AG04449 (cell line): ENCODE measurements at regions of chr13 and their contacts with region 1.

Region 1: DNA sequence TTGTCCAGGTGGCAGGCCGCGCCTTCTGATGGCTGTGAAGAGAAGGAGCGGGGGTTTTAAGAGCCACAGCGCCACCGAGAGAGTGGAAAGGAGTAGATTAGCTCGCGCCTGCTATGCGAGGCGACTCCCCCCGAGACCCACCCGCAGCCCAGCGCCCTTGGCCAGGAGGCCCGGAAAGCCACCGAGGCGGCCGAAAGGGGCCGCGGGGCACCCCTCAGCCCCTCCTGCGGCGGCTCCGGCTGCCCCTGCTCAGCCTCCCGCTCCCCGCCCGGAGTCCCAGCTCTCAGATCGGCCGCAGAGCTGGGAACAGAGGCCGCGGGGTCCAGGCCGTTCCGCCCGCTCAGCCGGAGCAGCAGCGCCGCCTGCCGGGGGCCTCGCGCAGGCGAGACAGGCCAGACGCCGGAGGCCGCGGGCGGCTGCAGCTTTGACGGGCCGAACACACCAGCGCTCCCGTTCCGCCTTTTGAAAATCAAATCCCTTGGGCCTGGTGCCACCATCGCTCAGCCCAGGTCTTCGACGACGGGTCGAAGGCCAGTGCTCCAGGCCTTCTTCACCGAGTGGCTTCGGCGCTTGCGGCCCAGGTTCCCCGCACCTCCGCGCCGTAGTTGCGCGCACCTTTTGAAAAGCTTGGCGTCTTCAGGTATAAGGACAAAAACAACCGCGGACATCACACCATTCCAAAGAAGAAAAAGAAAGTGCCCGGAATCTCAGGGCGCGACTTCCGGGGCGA is 15.3 kb downstream of the CDX2 start:
- DNase-seq: no peak
- H3K4me3 ChIP-seq: peak overlapping the region; percentile 56
- CTCF ChIP-seq: peak; percentile 84

Region 2: GRCh38 chr13:27367570-27367969 is 586.3 kb before region 1 on chr13:
- CTCF ChIA-PET with region 1: interaction called, 45 read pairs
- POLR2A ChIA-PET with region 1: no interaction called
- DNase-seq: no peak
- H3K4me3 ChIP-seq: no peak overlapping the region
- CTCF ChIP-seq: no peak

Region 3: DNA sequence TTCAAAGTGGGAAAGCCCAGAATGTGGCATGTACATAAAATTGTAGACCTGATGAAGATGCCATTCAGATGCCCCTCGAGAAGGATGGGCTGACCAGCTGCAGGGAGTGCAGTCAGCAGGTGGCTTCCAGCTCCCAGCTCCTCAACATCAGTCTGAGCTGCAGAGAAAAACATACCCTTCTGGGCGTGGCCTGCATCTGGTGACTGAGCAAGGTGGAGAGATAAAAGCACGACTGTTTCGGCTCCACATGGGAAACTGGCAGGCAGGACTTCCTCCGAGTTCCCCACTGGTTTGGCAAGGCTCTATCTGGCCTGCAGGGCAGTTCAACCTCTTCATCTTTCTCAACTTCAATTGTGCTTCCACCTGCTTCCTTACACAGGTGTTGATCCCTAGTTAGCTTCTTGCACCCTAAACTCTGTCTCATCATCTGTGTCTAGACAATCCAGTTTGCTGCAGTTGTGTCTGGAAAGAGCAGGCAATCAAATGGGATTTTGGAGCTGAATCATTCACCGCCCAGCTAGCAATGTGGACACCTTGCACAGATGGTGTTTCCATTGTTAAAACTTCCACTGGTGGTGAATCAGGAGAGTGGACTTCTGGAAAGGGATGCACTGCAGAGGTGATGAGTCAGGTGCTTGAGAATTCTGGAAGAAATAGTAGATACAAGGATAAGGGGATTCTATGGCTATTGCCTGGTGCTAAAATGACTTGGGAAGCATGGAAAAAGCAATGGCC is 275.4 kb before region 1 on chr13:
- CTCF ChIA-PET with region 1: no interaction called
- POLR2A ChIA-PET with region 1: no interaction called
- DNase-seq: no peak
- H3K4me3 ChIP-seq: no peak overlapping the region
- CTCF ChIP-seq: no peak

Region 4: GRCh38 chr13:27730191-27730590 is 223.7 kb before region 1 on chr13:
- CTCF ChIA-PET with region 1: no interaction called
- POLR2A ChIA-PET with region 1: no interaction called
- DNase-seq: no peak
- H3K4me3 ChIP-seq: no peak overlapping the region
- CTCF ChIP-seq: no peak

Region 5: DNA sequence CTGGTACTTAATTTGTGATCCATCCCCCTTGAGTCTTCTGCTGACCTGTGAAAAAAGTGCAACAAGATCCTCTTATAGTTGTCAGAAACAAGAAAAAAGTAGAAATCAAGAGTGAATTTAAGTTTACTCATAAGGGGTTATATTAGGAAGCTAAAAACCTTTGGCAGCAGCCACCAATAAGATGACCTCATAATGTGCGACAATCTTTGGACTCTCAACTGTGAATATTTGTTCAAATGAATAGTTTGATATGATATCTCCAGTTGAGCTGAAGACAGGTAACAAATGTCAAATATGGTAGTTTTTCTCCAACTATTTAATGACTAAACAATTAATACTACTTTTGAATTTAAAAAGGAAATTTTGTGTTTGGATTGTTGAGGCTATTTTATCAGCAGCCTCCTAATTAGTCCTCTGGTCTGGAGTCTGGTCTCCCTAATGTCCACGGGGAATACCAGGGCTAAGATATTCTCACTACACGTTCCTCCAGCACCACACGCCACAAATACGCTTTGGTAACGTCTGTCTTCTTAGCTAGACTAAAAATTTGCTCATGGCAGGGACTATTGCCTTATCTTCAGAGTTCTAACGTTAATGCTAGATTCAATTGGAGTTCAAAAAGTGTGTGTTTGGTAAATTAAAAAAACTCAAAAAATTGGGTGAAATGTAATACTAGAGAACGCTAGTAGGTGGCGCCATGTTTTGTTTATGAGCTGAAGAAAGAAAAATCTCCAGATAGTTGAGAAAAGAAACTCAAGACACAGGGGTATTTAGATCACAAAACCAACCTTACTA is 85.0 kb before region 1 on chr13:
- CTCF ChIA-PET with region 1: interaction called, 45 read pairs
- POLR2A ChIA-PET with region 1: no interaction called
- DNase-seq: no peak
- H3K4me3 ChIP-seq: no peak overlapping the region
- CTCF ChIP-seq: peak; percentile 30

Region 6: DNA sequence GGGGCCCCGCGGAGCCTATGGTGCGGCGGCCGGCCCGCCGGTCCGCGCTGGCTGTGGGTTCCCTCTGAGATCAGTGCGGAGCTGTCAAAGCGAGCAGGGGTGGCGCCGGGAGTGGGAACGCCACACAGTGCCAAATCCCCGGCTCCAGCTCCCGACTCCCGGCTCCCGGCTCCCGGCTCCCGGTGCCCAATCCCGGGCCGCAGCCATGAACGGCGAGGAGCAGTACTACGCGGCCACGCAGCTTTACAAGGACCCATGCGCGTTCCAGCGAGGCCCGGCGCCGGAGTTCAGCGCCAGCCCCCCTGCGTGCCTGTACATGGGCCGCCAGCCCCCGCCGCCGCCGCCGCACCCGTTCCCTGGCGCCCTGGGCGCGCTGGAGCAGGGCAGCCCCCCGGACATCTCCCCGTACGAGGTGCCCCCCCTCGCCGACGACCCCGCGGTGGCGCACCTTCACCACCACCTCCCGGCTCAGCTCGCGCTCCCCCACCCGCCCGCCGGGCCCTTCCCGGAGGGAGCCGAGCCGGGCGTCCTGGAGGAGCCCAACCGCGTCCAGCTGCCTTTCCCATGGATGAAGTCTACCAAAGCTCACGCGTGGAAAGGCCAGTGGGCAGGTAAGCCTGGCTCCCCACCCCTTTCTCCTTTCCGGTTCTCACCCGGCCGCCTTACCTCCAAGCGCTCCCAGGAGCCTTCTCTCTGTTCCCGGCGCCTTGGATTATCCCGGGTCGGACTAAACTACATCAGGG is 33.7 kb before region 1 on chr13 and contains the start of gene PDX1:
- CTCF ChIA-PET with region 1: interaction called, 10 read pairs
- POLR2A ChIA-PET with region 1: no interaction called
- DNase-seq: no peak
- H3K4me3 ChIP-seq: peak within 1 kb of the TSS; percentile 32; the same call in 1 of the 2 replicates
- CTCF ChIP-seq: no peak

Region 7: GRCh38 chr13:27933580-27934328 is 20.1 kb before region 1 on chr13:
- CTCF ChIA-PET with region 1: interaction called, 10 read pairs
- POLR2A ChIA-PET with region 1: no interaction called
- DNase-seq: no peak
- H3K4me3 ChIP-seq: no peak overlapping the region
- CTCF ChIP-seq: no peak

Region 8: GRCh38 chr13:27969082-27969865 is 15.4 kb after region 1 on chr13 and contains the start of gene CDX2:
- CTCF ChIA-PET with region 1: interaction called, 17 read pairs
- POLR2A ChIA-PET with region 1: no interaction called
- DNase-seq: no peak
- H3K4me3 ChIP-seq: no peak within 1 kb of the TSS
- CTCF ChIP-seq: no peak

Region 9: GRCh38 chr13:27977476-27978300 is 23.8 kb after region 1 on chr13:
- CTCF ChIA-PET with region 1: interaction called, 28 read pairs
- POLR2A ChIA-PET with region 1: no interaction called
- DNase-seq: no peak
- H3K4me3 ChIP-seq: no peak overlapping the region
- CTCF ChIP-seq: no peak

Region 10: GRCh38 chr13:28117689-28118377 is 164.0 kb after region 1 on chr13:
- CTCF ChIA-PET with region 1: no interaction called
- POLR2A ChIA-PET with region 1: no interaction called
- DNase-seq: no peak
- H3K4me3 ChIP-seq: no peak overlapping the region
- CTCF ChIP-seq: no peak

Region 11: GRCh38 chr13:28286263-28286662 is 332.4 kb after region 1 on chr13:
- CTCF ChIA-PET with region 1: no interaction called
- POLR2A ChIA-PET with region 1: no interaction called
- DNase-seq: no peak
- H3K4me3 ChIP-seq: no peak overlapping the region
- CTCF ChIP-seq: no peak